ENCODE measurements at regions of chr3 and their contacts with region 1.

Region 1: DNA sequence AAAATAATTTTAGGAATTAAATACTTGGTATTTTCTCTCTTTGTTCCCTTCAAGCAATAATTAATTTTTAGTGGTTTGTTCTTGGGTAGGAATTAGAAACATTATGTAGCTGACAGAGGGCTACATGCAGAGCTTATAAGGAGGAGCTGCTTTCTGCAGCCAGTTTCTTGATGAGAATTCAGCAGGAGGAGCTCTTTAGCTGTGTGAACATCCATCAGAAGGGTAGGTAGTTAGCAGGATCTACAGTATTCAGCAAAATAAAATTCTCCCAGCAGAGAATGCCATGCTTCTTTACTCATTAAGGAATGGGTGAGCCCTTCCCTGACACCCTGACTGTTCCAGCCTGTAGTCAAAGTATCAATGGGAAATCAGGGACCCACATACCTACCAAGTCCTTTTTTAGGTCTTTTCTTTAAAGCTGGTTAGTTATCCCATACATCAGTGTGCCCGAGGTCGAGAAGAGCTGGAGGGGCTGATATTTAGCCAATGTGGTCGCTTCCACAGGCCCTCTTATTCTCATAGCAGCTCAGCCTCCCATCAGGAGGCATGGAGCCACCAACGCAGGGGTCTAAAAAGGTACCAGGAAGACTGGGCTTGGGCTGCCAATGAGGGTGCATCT is 54.0 kb downstream of the KCNAB1 start:
- DNase-seq: no peak
- ATAC-seq: no peak

Region 2: GRCh38 chr3:155241579-155241978 is 932.8 kb before region 1 on chr3:
- intact Hi-C with region 1: no loop called
- DNase-seq: no peak
- ATAC-seq: no peak

Region 3: DNA sequence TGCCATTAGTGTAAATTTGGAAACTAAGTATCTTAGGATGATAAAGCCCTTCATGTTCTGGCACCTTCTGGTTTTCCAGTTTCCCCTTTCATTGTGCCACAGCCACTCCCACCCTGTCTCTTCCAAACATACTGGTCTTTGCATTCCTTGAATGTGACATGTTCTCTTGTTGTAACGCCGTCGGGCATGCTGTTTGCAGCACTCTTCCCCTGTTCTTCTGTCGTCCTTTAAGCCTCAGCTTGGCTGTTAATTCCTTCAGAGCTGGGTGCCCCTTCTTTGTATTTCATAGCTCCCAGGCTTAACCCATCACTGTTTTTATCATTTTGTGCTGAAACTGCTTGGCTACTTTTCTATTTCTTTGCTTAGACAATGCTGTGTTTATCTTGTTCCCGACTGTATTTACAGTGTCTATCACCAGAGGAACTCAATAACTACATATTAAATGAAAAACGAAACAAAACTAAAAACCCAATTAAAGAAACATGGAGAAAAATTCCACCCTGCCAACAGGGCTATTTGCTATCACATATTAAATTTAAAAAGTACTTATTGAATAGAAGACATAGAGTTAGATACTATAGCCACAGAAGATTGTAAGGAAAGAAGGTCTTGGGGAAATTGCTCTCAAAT is 149.3 kb before region 1 on chr3:
- intact Hi-C with region 1: no loop called
- DNase-seq: no peak
- ATAC-seq: no peak

Region 4: DNA sequence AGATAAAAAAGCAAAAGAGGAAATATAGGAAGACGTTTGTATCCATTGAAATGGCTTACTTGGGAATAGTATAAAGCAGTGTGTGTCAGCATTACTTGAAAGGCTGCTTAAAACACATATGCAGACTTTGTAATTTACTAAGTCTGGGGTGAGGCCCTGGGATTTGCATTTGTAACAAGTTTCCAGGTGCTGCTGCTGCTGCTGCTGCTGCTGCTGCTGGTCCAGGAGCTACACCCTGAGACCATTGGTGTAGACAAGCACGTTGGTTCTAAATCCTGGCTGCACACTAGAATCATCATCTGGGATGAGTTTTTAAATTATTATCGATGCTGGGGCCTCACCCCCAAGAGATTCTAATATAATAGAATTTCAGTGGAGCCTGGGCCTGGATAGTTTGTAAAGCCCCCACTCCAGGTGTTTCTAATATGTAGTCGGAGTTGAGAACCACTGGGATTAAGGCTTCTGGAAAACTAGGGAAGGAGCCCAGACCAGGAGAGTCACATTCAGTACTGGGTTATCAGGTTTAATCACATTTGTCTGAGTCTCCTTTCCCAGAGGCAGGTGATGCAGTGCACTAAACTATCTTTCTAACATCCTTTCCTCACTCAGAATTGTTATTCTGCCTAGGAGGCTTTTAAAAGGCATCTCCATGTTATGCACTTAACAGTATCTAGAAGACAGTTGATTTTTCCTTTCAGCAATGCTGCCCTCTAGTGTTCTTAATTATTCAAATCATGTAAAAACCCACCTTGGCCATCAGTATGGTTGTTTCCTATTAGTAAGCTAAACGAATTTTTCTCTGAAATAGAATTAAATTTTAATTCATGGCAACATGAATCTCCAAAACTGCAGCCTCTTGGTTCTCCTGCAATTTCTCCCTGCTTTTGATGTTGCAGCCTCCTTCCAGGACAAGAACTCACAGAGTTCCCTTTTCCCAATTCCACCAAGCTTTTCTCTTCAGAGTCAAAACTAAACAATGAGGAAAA is 335.1 kb after region 1 on chr3:
- intact Hi-C with region 1: loop called in 1 of 2 experiments (anchors 5 kb)
- DNase-seq: no peak
- ATAC-seq: peak; percentile 54